ENCODE measurements at regions of chr5 and their contacts with region 1.

Region 1: GRCh38 chr5:140381972-140382371 is 19.7 kb upstream of the ANKHD1 start:
- DNase-seq: no peak
- ATAC-seq: no peak

Region 2: DNA sequence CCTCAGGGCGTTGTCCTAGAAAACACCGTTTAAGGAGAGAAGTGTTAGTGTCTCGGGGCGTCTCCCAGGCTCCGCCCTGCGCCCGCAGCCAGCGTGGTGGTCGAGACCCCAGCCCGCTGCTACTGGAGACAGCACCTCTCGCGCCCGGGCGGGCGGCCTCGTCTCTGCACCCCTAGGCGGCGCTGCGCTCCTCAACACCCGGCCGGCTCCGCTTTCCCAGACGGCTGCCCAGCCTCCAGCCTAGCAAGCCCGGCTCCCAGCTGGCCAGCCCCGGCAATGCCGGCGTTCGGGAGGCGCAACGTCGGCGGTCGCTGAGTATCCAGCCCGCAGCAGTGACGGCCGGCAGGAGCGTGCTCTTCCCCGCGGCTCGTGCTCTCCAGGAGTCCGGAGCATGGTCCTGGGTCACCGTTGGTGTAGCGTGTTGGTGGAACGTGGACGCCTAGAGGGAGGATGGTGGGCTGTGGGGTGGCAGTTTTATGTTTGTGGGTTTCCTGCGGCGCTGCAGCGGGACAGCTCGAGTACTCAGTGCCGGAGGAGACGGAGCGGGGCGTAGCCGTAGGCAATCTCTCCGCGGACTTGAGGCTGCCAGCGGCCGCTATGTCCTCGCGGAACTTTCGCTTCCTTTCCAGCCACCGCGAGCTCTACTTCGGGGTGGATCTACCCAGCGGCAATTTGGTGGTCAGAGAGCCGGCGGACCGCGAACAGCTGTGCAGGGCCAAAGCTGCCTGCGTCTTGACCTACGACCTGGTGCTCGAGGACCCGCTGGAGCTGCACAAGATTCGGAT is 544.7 kb after region 1 on chr5:
- intact Hi-C with region 1: loop called in 1 of 2 experiments (anchors 10 kb)
- DNase-seq: peak; percentile 40 to 49
- ATAC-seq: peak; percentile 76

Measured in left colon (tissue), 2 donors.